Gastrocnemius medialis (tissue), 4 donors: ENCODE measurements at regions of chr5 and their contacts with region 1.

Region 1: DNA sequence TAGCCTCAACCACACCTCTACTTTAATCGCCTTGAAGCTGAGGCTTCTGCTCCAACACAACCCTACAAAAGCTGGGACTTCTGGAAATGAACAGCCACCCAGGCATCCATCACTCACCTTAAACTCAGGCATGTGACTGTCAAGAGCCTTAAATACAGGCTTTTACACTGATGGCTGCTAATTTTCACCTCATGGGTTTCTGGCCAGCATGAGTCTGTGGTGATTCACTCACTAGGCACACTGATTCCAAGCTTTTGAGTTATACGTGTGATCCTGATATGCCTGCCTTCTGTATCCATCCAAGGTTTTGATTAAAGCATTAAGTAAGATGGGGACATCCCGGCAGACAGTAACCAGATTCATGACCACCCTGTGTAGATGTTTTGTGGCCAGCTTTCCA is 8.9 kb downstream of the NSUN2 start:
- DNase-seq: no peak
- ATAC-seq: no peak
- H3K4me3 ChIP-seq: no peak overlapping the region
- H3K27ac ChIP-seq: no peak overlapping the region
- H3K4me1 ChIP-seq: no peaks in the 10 kb centered on the region
- H3K27me3 ChIP-seq: no peaks in the 10 kb centered on the region
- CTCF ChIP-seq: no peak
- POLR2A ChIP-seq: no peak

Region 2: DNA sequence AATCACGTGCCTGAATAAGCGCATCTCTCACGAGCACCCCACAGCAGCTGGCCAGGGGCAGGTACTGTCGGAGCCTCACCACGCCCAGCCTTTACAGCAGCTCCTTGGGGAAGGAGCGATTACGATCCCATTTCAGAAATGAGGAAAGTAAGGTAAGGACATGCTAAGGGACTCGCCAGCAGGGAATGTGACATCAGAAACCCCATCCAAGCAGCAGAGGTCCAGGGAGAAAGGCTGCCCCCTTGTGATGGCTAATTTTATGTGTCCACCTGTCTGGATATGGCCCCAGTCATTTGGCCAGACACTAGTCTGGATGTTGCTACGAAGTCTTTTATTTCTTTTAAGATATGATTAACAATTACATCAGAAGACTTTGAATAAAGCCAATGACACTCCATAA is 98.0 kb before region 1 on chr5:
- in situ Hi-C with region 1: no loop called
- intact Hi-C with region 1: no loop called
- DNase-seq: peak in 1 of 2 donors; percentile 39
- ATAC-seq: peak; percentile 56 to 76
- H3K4me3 ChIP-seq: no peak overlapping the region
- H3K27ac ChIP-seq: no peak overlapping the region
- H3K4me1 ChIP-seq: peaks cover 9 to 26% of the 10 kb centered on the region in 2 donors
- H3K27me3 ChIP-seq: no peaks in the 10 kb centered on the region
- CTCF ChIP-seq: peak in 3 of 5 experiments; percentile 29 to 37 (median 32)
- POLR2A ChIP-seq: no peak

Region 3: GRCh38 chr5:6732634-6733410 is 108.9 kb after region 1 on chr5:
- in situ Hi-C with region 1: loop called in 2 of 4 experiments (anchors 10 kb)
- intact Hi-C with region 1: no loop called
- DNase-seq: no peak
- ATAC-seq: peak in 1 of 2 donors; percentile 44
- H3K4me3 ChIP-seq: peak overlapping the region in 3 of 4 donors; percentile 15 to 21 (median 18)
- H3K27ac ChIP-seq: peak overlapping the region; percentile 54 to 70 (median 62)
- H3K4me1 ChIP-seq: peaks cover 55 to 78% of the 10 kb centered on the region in 2 donors
- H3K27me3 ChIP-seq: no peaks in the 10 kb centered on the region
- CTCF ChIP-seq: no peak
- POLR2A ChIP-seq: no peak